ENCODE measurements at regions of chr10 and their contacts with region 1.

Region 1: DNA sequence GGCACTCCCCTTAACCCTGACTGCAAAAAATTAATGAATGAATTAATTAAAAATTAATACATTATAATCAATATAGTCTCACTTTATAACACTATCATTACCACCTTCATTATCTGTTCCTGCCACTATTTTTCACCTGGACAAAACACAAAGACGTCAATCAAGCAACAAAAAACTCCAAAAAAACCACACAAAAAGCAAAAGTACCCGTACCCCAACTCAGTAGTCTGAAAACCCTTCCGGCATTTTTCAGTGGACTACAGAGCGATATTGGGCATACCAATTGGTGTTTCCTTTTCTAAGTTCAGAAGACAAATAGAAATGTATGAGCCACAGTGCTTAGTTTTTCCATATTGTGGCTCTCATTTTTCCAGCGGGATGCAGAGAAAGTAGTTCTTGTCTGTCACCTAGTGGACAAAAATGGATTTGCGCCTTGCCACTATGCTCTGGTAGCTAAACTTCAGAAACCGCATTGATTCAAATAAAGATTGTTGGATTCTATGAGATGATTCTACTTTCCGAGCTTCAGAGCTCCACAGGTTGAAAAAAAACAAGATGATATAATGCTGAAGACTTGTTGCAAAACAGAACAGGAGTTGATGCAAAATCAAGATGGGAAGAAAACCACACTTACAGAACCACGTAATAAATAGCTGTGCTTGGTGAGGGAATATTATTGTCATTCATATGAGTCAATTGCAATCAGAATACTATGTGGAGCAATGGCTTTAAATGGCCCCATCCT is 50.6 kb upstream of the ITGB1 start:
- DNase-seq: peak; percentile 100
- ATAC-seq: peak; percentile 12
- H3K4me3 ChIP-seq: peak overlapping the region; percentile 29
- H3K27ac ChIP-seq: peak overlapping the region; percentile 66
- H3K4me1 ChIP-seq: peaks cover 63% of the 10 kb centered on the region
- H3K27me3 ChIP-seq: no peaks in the 10 kb centered on the region
- CTCF ChIP-seq: peak; percentile 100

Region 2: DNA sequence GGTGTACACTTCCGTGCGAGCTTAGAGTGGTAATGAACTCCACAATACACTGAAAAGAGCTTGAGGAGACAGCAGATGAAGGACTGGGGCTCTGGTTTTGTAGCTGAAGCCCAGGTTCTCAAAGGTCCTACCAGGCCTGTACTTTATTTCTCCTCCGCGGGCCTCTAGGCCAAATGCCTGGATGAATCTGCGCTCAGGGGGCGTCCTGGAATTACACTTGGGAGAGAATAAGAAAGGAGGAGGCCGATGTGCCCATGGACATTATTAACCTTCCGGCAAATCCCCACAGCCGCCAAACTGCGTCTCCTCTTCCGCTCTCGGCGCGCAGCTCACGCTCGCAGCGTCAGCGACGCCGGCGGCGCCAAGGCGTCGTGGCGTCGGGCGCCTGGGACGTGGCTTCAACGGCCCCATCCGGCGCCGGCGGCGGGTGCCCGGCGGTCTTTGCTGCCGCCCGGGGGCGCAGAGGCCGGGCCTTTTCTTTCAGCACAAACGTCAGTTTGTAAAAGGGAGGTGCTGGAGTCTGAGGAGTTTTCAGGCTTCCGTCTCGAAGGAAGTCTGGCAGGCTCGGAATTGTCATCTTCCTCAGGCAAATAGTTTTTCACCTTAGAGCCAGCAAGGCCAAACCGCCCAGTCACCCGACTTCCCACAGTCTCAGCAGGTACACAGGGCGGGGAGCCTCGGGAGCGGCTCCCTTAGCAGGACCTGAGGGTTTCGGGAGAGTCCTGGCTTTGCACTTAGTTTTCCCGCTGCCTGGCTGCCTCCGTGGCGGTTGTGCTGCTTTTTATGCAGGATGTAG is 562.7 kb before region 1 on chr10 and contains the start of gene CCDC7:
- CTCF ChIA-PET with region 1: interaction called, 3 read pairs
- POLR2A ChIA-PET with region 1: no interaction called
- intact Hi-C with region 1: loop called (anchors 1 kb)
- DNase-seq: peak; percentile 99
- ATAC-seq: peak; percentile 96
- H3K4me3 ChIP-seq: peak within 1 kb of the TSS; percentile 79
- H3K27ac ChIP-seq: peak within 1 kb of the TSS; percentile 82
- H3K4me1 ChIP-seq: peaks cover 18% of the 10 kb centered on the region
- H3K27me3 ChIP-seq: no peaks in the 10 kb centered on the region
- CTCF ChIP-seq: peak; percentile 84
- total RNA-seq, gene CCDC7: 14.1 and 19.1 TPM in 2 replicates

Region 3: DNA sequence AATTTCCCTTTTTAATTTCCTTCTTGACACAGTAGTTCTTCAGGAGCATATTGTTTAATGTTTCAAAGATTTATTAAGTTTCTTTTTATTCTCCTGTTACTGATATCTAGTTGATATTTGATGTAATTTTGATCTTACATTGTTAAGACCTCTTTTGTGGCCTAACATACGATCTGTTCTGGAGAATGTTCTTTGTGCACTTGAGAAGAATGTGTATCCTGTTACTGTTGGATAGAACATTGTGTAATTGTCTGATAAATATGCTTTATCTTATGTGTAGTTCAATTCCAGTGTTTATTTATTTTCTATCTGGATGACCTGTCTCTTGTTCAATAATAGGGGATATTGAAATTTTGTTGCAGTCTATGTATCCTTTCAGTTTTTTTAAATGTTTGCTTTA is 157.4 kb before region 1 on chr10:
- CTCF ChIA-PET with region 1: no interaction called
- POLR2A ChIA-PET with region 1: no interaction called
- intact Hi-C with region 1: loop called (anchors 5 kb)
- DNase-seq: no peak
- ATAC-seq: no peak
- H3K4me3 ChIP-seq: no peak overlapping the region
- H3K27ac ChIP-seq: no peak overlapping the region
- H3K4me1 ChIP-seq: peaks cover 10% of the 10 kb centered on the region; the same call in 1 of the 2 replicates
- H3K27me3 ChIP-seq: no peaks in the 10 kb centered on the region
- CTCF ChIP-seq: no peak

Region 4: DNA sequence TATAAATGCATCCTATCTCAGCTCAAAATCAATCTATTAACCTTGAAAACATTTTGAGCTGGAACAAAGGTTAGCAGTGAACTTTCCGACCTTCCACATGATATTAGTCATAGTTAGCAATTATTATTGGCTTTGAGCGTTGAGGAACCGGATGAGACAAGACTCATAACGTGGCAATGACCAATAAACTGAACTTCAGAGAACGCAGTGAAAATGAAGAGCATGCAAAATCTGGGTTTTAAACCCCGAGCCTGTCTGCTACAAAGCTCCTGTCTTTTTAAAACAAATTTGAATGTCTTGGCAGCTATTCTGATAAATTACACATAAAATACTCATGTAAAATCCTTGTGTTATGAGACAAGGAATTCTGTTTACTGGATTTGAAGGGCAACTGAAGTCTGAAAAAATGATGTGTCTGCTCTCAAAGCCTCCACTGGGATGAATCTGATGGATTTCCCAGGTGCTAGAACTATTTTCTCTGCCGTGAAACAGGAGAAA is 24.0 kb after region 1 on chr10:
- CTCF ChIA-PET with region 1: interaction called, 18 read pairs
- POLR2A ChIA-PET with region 1: no interaction called
- intact Hi-C with region 1: loop called (anchors 1 kb)
- DNase-seq: peak; percentile 100
- ATAC-seq: peak; percentile 90
- H3K4me3 ChIP-seq: peak overlapping the region; percentile 41
- H3K27ac ChIP-seq: peak overlapping the region; percentile 75
- H3K4me1 ChIP-seq: peaks cover 20% of the 10 kb centered on the region
- H3K27me3 ChIP-seq: no peaks in the 10 kb centered on the region
- CTCF ChIP-seq: no peak

Region 5: GRCh38 chr10:33248638-33249037 is 240.0 kb after region 1 on chr10:
- CTCF ChIA-PET with region 1: interaction called, 3 read pairs
- POLR2A ChIA-PET with region 1: no interaction called
- intact Hi-C with region 1: loop called (anchors 2 kb)
- DNase-seq: peak; percentile 100
- ATAC-seq: peak; percentile 43
- H3K4me3 ChIP-seq: no peak overlapping the region
- H3K27ac ChIP-seq: peak overlapping the region; percentile 65
- H3K4me1 ChIP-seq: peaks cover 52% of the 10 kb centered on the region
- H3K27me3 ChIP-seq: no peaks in the 10 kb centered on the region
- CTCF ChIP-seq: no peak